Activated B cell treated with CpG ODN at 0.5 μM for 24 hours (primary cell): ENCODE measurements at regions of chrX and their contacts with region 1.

Region 1: GRCh38 chrX:134026565-134027311 is 41.3 kb upstream of the GPC3 start:
- DNase-seq: no peak
- ATAC-seq: no peak
- H3K4me3 Mint-ChIP-seq: no peak overlapping the region
- H3K27ac Mint-ChIP-seq: no peak overlapping the region
- H3K4me1 Mint-ChIP-seq: no peaks in the 10 kb centered on the region
- H3K27me3 Mint-ChIP-seq: peaks cover 6% of the 10 kb centered on the region
- CTCF ChIP-seq: no peak

Region 2: GRCh38 chrX:132968296-132968949 is 1058.3 kb before region 1 on chrX:
- CTCF ChIA-PET with region 1: no interaction called
- POLR2A ChIA-PET with region 1: no interaction called
- intact Hi-C with region 1: loop called (anchors 10 kb)
- DNase-seq: no peak
- ATAC-seq: no peak
- H3K4me3 Mint-ChIP-seq: no peak overlapping the region
- H3K27ac Mint-ChIP-seq: no peak overlapping the region
- H3K4me1 Mint-ChIP-seq: no peaks in the 10 kb centered on the region
- H3K27me3 Mint-ChIP-seq: peaks cover 3% of the 10 kb centered on the region
- CTCF ChIP-seq: no peak